Activated naive CD4-positive, alpha-beta T cell treated with anti-CD3 and anti-CD28 coated beads, Interleukin-2, amount 10 ng/mL, durations not matched to agents 7 days and 5 days (primary cell): ENCODE measurements at regions of chr2 and their contacts with region 1.

Region 1: DNA sequence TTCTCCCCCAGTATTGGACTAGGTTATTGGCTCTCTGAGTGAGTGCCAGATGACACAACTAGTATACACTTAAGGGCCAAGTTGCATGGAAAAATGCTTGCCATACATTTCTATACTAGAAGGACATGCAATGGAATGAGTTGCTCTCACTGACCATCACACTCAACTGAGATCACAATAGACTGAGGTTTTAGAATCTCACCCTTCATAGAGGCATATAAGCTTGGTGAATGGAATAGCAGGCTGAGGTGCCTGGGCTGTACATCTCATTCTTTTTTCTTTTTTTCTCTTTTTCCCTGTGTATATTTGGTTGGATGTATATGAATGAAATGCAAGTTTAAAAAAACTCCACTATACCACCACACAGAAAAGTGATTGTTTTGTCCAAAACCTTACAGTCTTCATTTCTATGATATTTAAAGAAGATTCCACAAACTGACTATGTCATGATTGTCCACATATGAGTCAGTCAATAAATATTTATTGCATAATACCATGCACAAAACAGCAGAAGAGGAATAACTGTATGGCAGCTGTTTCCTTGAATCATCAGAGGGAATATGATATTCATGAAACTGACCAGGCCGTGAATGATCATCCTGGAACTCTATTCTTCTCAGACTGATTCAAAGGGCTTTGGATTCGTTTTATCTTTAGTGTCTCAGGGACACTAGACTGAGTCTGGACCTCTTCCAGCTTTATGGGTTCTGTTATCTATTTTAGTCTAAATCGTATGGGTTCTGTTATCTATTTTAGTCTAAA is 122.6 kb upstream of the STK17B start:
- DNase-seq: no peak
- H3K4me3 Mint-ChIP-seq: no peak overlapping the region
- H3K27ac Mint-ChIP-seq: no peak overlapping the region
- H3K4me1 Mint-ChIP-seq: peaks cover 37% of the 10 kb centered on the region
- H3K27me3 Mint-ChIP-seq: no peaks in the 10 kb centered on the region

Region 2: DNA sequence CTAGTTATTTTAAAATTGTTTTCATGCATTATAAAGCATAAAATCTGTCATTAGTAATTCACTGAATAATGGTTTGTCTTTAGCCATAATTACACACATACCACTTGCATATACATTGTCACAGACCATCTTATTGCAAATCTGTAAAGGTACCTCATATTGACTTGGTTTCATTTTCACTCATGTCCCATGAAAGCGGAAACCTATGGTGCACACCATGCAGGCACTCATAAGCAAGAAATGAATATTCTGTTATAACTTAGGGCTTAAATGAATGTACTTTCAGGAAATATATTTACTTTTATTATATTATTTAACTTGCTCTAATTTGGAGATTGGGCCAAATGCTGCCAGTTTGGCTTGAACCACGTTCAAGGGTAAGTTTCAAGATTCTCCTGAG is 93.4 kb before region 1 on chr2:
- CTCF ChIA-PET with region 1: no interaction called
- DNase-seq: peak; percentile 53
- H3K4me3 Mint-ChIP-seq: peak overlapping the region; percentile 37
- H3K27ac Mint-ChIP-seq: peak overlapping the region; percentile 88
- H3K4me1 Mint-ChIP-seq: peaks cover 47% of the 10 kb centered on the region
- H3K27me3 Mint-ChIP-seq: no peaks in the 10 kb centered on the region

Region 3: GRCh38 chr2:196337208-196337953 is 43.4 kb after region 1 on chr2:
- CTCF ChIA-PET with region 1: interaction called, 11 read pairs
- DNase-seq: peak; percentile 35
- H3K4me3 Mint-ChIP-seq: no peak overlapping the region
- H3K27ac Mint-ChIP-seq: no peak overlapping the region
- H3K4me1 Mint-ChIP-seq: no peaks in the 10 kb centered on the region
- H3K27me3 Mint-ChIP-seq: peaks cover 14% of the 10 kb centered on the region

Region 4: DNA sequence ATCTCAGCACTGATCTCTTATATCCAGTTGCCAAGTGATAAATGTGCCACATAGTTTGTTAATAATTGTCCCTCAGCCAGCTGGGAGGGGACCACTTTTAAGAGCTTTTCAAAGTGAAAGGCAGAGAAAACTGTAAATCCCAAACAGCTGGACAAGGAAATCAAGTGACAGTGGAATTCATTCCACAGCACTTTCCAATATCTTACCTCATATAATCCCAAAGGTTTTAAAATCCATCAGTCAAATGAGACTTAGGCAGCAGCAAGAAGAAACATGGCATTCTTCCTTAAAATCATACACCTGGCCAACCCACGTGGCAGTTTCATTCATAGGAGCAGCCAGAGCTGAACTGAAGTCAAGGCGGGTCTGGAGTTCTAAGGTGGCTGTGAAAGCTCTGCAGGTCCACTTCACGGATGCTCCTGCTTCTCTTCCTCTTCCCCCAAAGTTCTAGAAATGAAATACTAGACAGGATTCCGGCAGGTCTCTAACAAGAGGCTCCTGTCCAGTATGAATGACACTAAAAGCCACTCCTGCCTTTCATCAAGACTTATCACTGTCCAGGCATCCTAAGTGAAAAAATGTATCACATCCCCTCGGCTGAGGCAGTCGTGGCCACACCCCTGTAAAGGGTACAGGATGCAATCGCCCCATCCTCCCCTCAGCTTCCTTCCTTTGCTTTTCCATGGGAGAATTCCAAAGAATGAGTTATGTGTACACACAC is 67.8 kb after region 1 on chr2:
- CTCF ChIA-PET with region 1: no interaction called
- DNase-seq: no peak
- H3K4me3 Mint-ChIP-seq: no peak overlapping the region
- H3K27ac Mint-ChIP-seq: no peak overlapping the region
- H3K4me1 Mint-ChIP-seq: peaks cover 13% of the 10 kb centered on the region
- H3K27me3 Mint-ChIP-seq: peaks cover 6% of the 10 kb centered on the region